Activated CD4-positive, alpha-beta T cell treated with anti-CD3 and anti-CD28 coated beads for 36 hours (primary cell): ENCODE measurements at regions of chr1 and their contacts with region 1.

Region 1: DNA sequence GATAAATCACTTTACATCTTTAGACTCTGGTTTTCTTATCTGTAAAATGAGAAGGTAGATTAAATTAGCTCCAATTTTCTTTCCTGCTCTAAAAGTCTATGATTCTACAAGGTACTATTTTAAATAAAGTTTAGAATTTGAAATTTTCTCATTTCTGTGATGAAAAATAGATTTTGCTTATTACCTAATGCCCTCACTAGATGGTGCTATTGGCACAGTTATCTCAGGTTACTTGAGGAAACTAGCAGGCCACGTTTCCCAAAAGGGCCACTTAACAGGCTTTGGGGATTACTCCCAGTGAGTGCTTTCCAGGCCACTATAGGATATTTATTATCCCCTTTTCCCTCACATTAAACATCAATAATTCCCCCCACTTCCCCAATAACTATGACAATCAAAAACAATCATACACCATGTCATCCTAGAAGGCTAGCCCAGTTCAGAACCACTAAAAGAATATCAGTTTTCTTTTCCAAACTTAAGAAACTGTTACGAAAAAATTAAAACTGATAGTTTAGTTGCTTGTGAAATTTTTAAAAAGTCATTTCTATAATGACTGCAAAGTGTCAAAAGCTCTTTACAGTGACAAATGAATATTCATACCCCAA is 30.6 kb downstream of the OMA1 start:
- DNase-seq: peak; percentile 29
- ATAC-seq: peak; percentile 65
- H3K4me3 Mint-ChIP-seq: no peak overlapping the region
- H3K27ac Mint-ChIP-seq: peak overlapping the region; percentile 66
- H3K4me1 Mint-ChIP-seq: peaks cover 10% of the 10 kb centered on the region
- H3K27me3 Mint-ChIP-seq: no peaks in the 10 kb centered on the region

Region 2: GRCh38 chr1:58539553-58539952 is 23.7 kb after region 1 on chr1:
- CTCF ChIA-PET with region 1: interaction called, 95 read pairs
- POLR2A ChIA-PET with region 1: no interaction called
- intact Hi-C with region 1: no loop called
- DNase-seq: no peak
- ATAC-seq: no peak
- H3K4me3 Mint-ChIP-seq: no peak overlapping the region
- H3K27ac Mint-ChIP-seq: no peak overlapping the region
- H3K4me1 Mint-ChIP-seq: peaks cover 3% of the 10 kb centered on the region
- H3K27me3 Mint-ChIP-seq: no peaks in the 10 kb centered on the region

Region 3: DNA sequence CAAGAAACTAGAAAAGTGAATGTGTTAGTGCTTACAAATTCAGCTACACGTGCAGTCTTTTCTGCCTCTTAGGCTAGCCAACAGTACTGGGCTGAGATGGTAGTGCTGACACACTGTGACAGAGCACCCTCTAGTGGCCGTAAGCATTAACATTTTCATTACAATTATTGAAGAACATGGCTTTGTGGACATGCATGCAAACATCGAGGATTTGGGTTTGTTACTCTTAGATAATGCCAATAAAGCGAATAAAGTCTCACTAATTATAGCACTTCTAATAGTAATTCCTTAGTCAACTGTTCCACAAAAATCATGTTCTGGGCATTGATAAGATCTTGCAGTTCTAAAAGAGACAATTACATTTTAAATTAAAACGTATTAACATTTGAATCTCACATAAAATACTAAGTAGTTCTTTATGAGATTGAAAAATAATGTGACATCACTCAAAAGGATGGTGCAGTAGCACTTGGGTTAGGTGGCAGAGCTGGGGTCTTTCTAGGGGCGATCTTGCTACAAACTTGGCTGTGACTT is 136.8 kb after region 1 on chr1:
- CTCF ChIA-PET with region 1: interaction called, 97 read pairs
- POLR2A ChIA-PET with region 1: no interaction called
- intact Hi-C with region 1: loop called (anchors 1 kb)
- DNase-seq: peak; percentile 73
- ATAC-seq: peak; percentile 93
- H3K4me3 Mint-ChIP-seq: no peak overlapping the region
- H3K27ac Mint-ChIP-seq: no peak overlapping the region
- H3K4me1 Mint-ChIP-seq: peaks cover 12% of the 10 kb centered on the region
- H3K27me3 Mint-ChIP-seq: no peaks in the 10 kb centered on the region

Region 4: GRCh38 chr1:58699011-58699762 is 183.3 kb after region 1 on chr1:
- CTCF ChIA-PET with region 1: no interaction called
- POLR2A ChIA-PET with region 1: no interaction called
- intact Hi-C with region 1: no loop called
- DNase-seq: no peak
- ATAC-seq: peak; percentile 16
- H3K4me3 Mint-ChIP-seq: peak overlapping the region; percentile 85
- H3K27ac Mint-ChIP-seq: peak overlapping the region; percentile 94
- H3K4me1 Mint-ChIP-seq: peaks cover 11% of the 10 kb centered on the region
- H3K27me3 Mint-ChIP-seq: no peaks in the 10 kb centered on the region

Region 5: DNA sequence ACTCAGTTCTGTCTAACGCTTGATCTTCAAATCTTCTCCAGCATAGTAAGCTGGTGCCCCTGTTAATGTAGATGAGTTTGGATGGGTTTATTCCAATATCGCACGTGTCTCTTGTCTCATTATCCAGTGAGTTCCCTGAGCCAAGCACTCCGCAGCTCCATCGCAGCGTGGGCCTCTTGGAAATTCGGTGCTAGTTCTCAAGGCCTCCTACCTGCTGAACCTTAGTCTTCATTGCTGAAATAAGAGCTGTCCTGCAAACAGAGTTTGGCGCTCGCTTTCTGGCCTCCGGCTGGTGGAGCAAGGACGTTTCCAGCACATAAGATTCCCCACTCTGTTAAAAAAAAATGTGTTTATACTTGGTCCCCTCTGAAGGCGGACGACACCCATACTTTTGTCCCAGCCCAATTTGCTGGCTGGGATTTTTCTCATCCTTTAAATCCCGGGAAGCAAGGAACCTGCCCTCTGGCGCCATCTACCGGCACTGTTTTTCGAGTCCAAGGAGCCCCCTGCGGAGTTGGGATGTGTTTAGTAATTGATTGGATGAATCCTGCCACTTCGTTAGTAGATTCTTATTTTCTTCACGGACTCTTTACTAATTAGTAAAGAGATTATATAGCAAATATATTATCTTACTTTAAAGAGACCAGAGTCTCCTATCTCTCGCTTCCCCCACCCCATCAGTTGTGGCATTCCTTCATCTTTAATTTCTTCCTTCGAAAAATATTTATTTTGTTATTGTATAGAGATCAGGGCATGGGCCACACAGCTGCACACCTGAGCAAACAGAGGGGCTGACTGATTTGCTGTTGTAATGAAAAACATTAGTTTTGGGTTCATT is 253.3 kb after region 1 on chr1:
- CTCF ChIA-PET with region 1: interaction called, 3 read pairs
- POLR2A ChIA-PET with region 1: no interaction called
- intact Hi-C with region 1: loop called (anchors 5 to 10 kb)
- DNase-seq: peak; percentile 72
- ATAC-seq: no peak
- H3K4me3 Mint-ChIP-seq: no peak overlapping the region
- H3K27ac Mint-ChIP-seq: no peak overlapping the region
- H3K4me1 Mint-ChIP-seq: peaks cover 12% of the 10 kb centered on the region
- H3K27me3 Mint-ChIP-seq: no peaks in the 10 kb centered on the region

Region 6: GRCh38 chr1:59759156-59759925 is 1243.4 kb after region 1 on chr1:
- CTCF ChIA-PET with region 1: interaction called, 17 read pairs
- POLR2A ChIA-PET with region 1: no interaction called
- intact Hi-C with region 1: loop called (anchors 2 to 5 kb)
- DNase-seq: peak; percentile 84
- ATAC-seq: peak; percentile 98
- H3K4me3 Mint-ChIP-seq: peak overlapping the region; percentile 16
- H3K27ac Mint-ChIP-seq: no peak overlapping the region
- H3K4me1 Mint-ChIP-seq: no peaks in the 10 kb centered on the region
- H3K27me3 Mint-ChIP-seq: no peaks in the 10 kb centered on the region